Ovary (tissue), 10 donors: ENCODE measurements at regions of chr6 and their contacts with region 1.

Region 1: DNA sequence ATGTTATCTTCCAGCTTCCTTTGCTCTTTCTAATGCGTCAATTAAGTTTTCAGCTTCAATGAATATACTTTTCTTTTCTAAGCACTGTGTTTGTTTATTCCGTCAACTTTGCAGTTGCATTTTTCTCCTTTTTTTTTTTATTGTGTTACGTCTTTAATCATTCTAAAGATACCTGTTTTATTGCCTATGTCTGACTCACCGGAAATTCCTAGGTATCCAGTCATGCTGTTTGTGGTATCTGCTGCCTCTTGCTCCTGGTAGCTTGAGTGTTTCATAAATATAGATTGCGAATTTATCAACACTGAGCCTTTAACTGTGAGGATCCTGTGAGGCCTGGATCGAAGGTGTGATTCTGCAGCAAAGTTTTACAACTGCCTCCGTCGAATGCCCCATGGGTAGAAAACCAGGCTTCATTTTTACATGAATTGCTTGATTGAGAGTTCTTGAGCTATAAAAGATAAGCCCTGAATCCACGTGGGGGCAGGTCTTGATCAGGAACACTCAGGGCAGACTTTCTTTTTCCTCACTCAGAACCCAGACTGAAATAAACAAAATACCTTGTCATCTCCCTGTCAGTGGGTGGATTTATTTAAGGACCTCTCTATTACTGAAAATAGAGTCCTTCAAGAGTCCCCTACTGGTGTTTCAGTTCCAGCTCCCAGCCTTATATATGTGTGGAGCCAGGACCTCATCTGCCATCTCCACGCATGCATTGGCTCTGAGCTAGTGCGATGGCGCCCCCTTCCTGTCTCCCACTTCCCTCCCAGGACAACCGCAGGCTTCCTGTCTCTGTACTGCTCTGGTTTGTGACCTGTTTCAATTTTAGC is 60.1 kb upstream of the LRRC1 start:
- DNase-seq: no peak
- H3K4me3 ChIP-seq: no peak overlapping the region
- H3K27ac ChIP-seq: no peak overlapping the region
- H3K4me1 ChIP-seq: peaks cover 1% of the 10 kb centered on the region
- H3K27me3 ChIP-seq: no peaks in the 10 kb centered on the region
- CTCF ChIP-seq: no peak
- EP300 ChIP-seq: no peak
- POLR2A ChIP-seq: no peak

Region 2: GRCh38 chr6:52661551-52661950 is 1073.1 kb before region 1 on chr6:
- intact Hi-C with region 1: no loop called
- DNase-seq: no peak
- H3K4me3 ChIP-seq: no peak overlapping the region
- H3K27ac ChIP-seq: no peak overlapping the region
- H3K4me1 ChIP-seq: no peaks in the 10 kb centered on the region
- H3K27me3 ChIP-seq: no peaks in the 10 kb centered on the region
- CTCF ChIP-seq: no peak
- EP300 ChIP-seq: no peak
- POLR2A ChIP-seq: no peak

Region 3: GRCh38 chr6:53029257-53029656 is 705.4 kb before region 1 on chr6:
- intact Hi-C with region 1: no loop called
- DNase-seq: no peak
- H3K4me3 ChIP-seq: no peak overlapping the region
- H3K27ac ChIP-seq: no peak overlapping the region
- H3K4me1 ChIP-seq: peaks cover 7% of the 10 kb centered on the region
- H3K27me3 ChIP-seq: no peaks in the 10 kb centered on the region
- CTCF ChIP-seq: no peak
- EP300 ChIP-seq: no peak
- POLR2A ChIP-seq: no peak

Region 4: GRCh38 chr6:53544470-53545308 is 190.0 kb before region 1 on chr6 and contains the start of gene GCLC:
- intact Hi-C with region 1: loop called in 1 of 4 experiments (anchors 10 kb)
- DNase-seq: peak; percentile 93 to 96 (median 94)
- H3K4me3 ChIP-seq: peak within 1 kb of the TSS; percentile 81
- H3K27ac ChIP-seq: peak within 1 kb of the TSS; percentile 67 to 89
- H3K4me1 ChIP-seq: peaks cover 3% of the 10 kb centered on the region
- H3K27me3 ChIP-seq: no peaks in the 10 kb centered on the region
- CTCF ChIP-seq: peak; percentile 35 to 78 (median 66)
- EP300 ChIP-seq: no peak
- POLR2A ChIP-seq: peak; percentile 91
- total RNA-seq, gene GCLC: 17.8 to 42.8 (median 29.4) TPM

Region 5: GRCh38 chr6:53634184-53634631 is 100.5 kb before region 1 on chr6:
- intact Hi-C with region 1: no loop called
- DNase-seq: no peak
- H3K4me3 ChIP-seq: no peak overlapping the region
- H3K27ac ChIP-seq: no peak overlapping the region
- H3K4me1 ChIP-seq: no peaks in the 10 kb centered on the region
- H3K27me3 ChIP-seq: no peaks in the 10 kb centered on the region
- CTCF ChIP-seq: no peak
- EP300 ChIP-seq: no peak
- POLR2A ChIP-seq: no peak

Region 6: GRCh38 chr6:53768636-53769035 is 34.0 kb after region 1 on chr6:
- intact Hi-C with region 1: loop called in 1 of 4 experiments (anchors 2 kb)
- DNase-seq: no peak
- H3K4me3 ChIP-seq: no peak overlapping the region
- H3K27ac ChIP-seq: no peak overlapping the region
- H3K4me1 ChIP-seq: no peaks in the 10 kb centered on the region
- H3K27me3 ChIP-seq: no peaks in the 10 kb centered on the region
- CTCF ChIP-seq: no peak
- EP300 ChIP-seq: no peak
- POLR2A ChIP-seq: no peak

Region 7: GRCh38 chr6:53888931-53889330 is 154.2 kb after region 1 on chr6:
- intact Hi-C with region 1: no loop called
- DNase-seq: no peak
- H3K4me3 ChIP-seq: no peak overlapping the region
- H3K27ac ChIP-seq: no peak overlapping the region
- H3K4me1 ChIP-seq: no peaks in the 10 kb centered on the region
- H3K27me3 ChIP-seq: no peaks in the 10 kb centered on the region
- CTCF ChIP-seq: no peak
- EP300 ChIP-seq: no peak
- POLR2A ChIP-seq: no peak